ENCODE measurements at regions of chr1 and their contacts with region 1.

Region 1: GRCh38 chr1:72282271-72283021 is at the start of gene NEGR1:
- DNase-seq: peak; percentile 54 to 67
- ATAC-seq: peak; percentile 82 to 88 (median 82)
- H3K4me3 ChIP-seq: peak within 1 kb of the TSS; percentile 73
- H3K4me3 Mint-ChIP-seq: no peak within 1 kb of the TSS
- H3K27ac ChIP-seq: peak within 1 kb of the TSS; percentile 84
- H3K27ac Mint-ChIP-seq: peak within 1 kb of the TSS in 1 of 2 donors; percentile 2
- H3K4me1 ChIP-seq: peaks cover 5% of the 10 kb centered on the region
- H3K4me1 Mint-ChIP-seq: peaks cover 16 to 19% of the 10 kb centered on the region in 2 donors
- H3K27me3 ChIP-seq: no peaks in the 10 kb centered on the region
- H3K27me3 Mint-ChIP-seq: no peaks in the 10 kb centered on the region
- CTCF ChIP-seq: no peak
- total RNA-seq, gene NEGR1: 0.55 to 1.3 TPM in 2 of 3 donors, not detected in the other

Region 2: GRCh38 chr1:72341661-72342060 is 59.2 kb after region 1 on chr1:
- intact Hi-C with region 1: loop called (anchors 10 kb)
- DNase-seq: no peak
- ATAC-seq: no peak
- H3K4me3 ChIP-seq: no peak overlapping the region
- H3K4me3 Mint-ChIP-seq: no peak overlapping the region
- H3K27ac ChIP-seq: no peak overlapping the region
- H3K27ac Mint-ChIP-seq: no peak overlapping the region
- H3K4me1 ChIP-seq: no peaks in the 10 kb centered on the region
- H3K4me1 Mint-ChIP-seq: no peaks in the 10 kb centered on the region
- H3K27me3 ChIP-seq: no peaks in the 10 kb centered on the region
- H3K27me3 Mint-ChIP-seq: no peaks in the 10 kb centered on the region
- CTCF ChIP-seq: no peak

Region 3: DNA sequence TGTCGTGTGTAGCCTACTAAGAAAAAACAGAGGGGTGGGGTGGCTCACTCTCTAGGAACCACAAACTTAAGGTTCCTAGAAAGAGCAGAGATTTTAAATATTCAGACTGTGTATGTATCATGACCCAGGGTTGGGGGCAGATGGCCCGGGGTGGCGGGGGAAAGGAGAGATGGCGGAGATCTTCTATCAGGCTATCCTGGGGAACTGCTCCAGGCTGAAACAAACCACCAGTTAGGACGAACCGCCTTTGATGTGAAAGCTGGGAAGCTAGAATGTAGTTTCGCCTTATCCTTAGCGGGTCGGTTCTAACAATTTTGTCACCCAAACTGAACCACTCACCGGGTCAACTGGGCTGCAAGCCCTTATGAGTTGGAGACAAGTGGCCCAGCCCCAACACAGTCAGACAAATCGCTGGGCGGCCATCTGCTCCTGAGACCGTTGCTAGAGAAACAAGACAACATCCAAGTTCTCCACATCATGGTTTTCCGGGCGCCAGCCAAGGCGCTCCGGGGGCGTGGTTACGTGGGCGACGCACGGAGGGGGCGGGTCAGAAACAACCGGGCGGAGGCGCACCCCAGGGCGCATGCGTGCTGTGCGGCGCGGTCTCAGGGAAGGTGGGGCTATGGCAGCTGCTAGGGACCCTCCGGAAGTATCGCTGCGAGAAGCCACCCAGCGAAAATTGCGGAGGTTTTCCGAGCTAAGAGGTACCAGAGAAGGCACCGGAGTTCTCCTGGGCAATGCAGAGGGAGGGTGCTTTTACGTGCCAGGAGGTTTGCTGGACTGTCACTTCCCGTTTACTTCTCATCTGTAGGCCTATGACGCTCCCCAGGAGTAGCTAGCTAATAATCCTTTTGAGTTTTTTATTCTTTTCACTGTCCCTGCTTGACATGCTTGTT is 1915.5 kb after region 1 on chr1 and contains the starts of genes FPGT and LRRIQ3:
- intact Hi-C with region 1: loop called (anchors 5 kb)
- DNase-seq: peak; percentile 92 to 98
- ATAC-seq: peak; percentile 97 to 100 (median 97)
- H3K4me3 ChIP-seq: peak within 1 kb of the TSS; percentile 75
- H3K4me3 Mint-ChIP-seq: peak within 1 kb of the TSS; percentile 95
- H3K27ac ChIP-seq: peak within 1 kb of the TSS; percentile 82
- H3K27ac Mint-ChIP-seq: peak within 1 kb of the TSS; percentile 92 to 93
- H3K4me1 ChIP-seq: peaks cover 4% of the 10 kb centered on the region
- H3K4me1 Mint-ChIP-seq: peaks cover 18 to 25% of the 10 kb centered on the region in 2 donors
- H3K27me3 ChIP-seq: no peaks in the 10 kb centered on the region
- H3K27me3 Mint-ChIP-seq: peaks cover 0 to 8% of the 10 kb centered on the region in 2 donors
- CTCF ChIP-seq: no peak
- total RNA-seq, gene FPGT: 3.0 to 5.4 (median 3.5) TPM
- total RNA-seq, gene LRRIQ3: 0.16 to 0.85 (median 0.59) TPM